Heart right ventricle (tissue), 16 donors: ENCODE measurements at regions of chr1 and their contacts with region 1.

Region 1: DNA sequence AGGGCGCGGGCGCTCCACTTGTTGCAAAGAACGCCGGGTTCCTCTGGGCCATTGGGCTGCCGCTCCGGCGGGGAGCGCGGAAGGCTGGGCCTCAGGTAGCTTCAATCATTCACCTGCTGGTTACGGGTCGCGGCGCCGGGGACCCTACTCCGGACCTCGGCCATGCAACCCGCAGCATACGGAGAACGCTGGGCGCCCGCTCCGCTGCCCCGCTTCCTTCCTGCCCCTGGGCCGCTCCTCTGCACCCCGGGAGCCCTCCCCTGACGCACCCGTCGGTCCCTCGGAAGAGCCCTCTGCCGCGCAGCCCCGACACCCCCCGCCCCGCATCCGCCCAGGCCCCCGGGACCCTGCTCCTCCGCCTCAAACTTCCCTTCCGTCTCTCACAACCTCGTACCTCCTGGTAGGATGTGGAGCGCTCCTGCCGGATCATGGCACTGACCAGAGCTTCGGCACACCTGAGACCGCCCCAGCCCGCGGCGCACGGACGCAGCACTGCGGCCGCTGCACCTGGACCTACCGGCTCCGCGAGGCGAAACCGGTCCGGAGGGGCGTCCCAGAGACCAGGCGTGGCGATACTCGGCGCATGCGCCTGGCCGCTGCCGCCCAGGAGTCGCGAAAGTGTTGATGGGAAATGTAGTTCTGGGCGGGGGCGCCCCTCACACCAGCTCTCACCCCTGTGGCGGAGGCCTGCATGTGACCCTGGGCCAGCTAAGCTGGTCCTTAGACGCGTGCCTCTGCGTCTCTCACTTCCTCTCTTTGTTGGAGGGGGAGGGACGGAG is at the start of gene PACC1:
- DNase-seq: peak; percentile 87 to 90
- ATAC-seq: peak; percentile 95 to 98 (median 97)
- H3K4me3 ChIP-seq: peak within 1 kb of the TSS; percentile 70 to 96 (median 86)
- H3K27ac ChIP-seq: peak within 1 kb of the TSS in 8 of 10 donors; percentile 13 to 81 (median 40)
- H3K4me1 ChIP-seq: peaks cover 0 to 50% (median 7%) of the 10 kb centered on the region in 9 donors
- H3K27me3 ChIP-seq: no peaks in the 10 kb centered on the region
- CTCF ChIP-seq: peak in 2 of 9 donors; percentile 14 to 15
- total RNA-seq, gene PACC1: 1.9 to 4.6 (median 2.4) TPM

Region 2: DNA sequence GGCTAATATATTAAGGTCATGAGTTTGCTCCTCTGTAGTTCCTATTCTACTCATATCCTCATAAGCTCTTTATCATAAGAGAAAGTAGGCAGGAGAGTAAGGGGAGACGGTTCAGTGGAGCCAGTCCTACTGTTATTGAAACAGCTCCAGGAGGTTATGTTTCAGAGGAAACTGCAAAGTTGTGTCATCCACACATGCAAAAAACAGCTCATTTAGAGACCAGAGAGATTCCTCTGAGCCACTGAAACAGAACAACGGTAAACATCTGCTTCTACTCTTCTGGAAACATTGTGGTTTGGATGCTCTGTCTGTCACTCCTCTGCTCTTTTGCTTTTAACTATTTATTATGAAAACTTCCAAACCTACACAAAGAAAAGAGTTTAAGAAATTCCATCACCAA is 195.6 kb before region 1 on chr1:
- intact Hi-C with region 1: no loop called
- DNase-seq: no peak
- ATAC-seq: no peak
- H3K4me3 ChIP-seq: no peak overlapping the region
- H3K27ac ChIP-seq: no peak overlapping the region
- H3K4me1 ChIP-seq: peaks cover 0 to 25% (median 6%) of the 10 kb centered on the region in 9 donors
- H3K27me3 ChIP-seq: no peaks in the 10 kb centered on the region
- CTCF ChIP-seq: no peak

Region 3: DNA sequence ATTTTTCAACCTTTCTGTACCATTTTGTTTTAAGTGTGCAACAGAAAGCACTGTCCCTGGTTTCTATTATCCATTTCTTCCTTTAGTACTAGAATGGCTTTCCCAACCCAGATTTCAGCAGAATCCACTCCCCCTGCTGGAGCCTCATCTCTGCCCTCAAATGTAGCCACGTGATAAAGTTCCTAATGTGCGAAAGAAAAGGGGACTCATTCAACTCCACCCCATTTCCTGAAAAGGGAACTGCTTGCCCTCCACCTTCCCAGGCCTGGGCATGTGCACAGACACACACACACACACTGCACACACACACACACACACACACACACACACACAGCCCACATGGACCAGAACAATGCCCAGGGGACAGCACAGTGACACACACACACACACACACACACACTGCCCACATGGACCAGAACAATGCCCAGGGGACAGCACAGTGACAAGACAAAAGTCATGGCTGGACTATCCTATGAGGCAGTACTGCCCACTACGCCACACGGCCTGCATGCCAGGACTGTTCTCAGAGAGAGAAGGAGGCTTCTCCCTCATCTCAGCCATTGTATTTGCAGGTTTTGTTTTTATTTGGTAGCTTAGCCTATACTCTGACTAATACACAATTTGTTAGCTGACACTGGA is 33.0 kb before region 1 on chr1:
- intact Hi-C with region 1: no loop called
- DNase-seq: no peak
- ATAC-seq: no peak
- H3K4me3 ChIP-seq: no peak overlapping the region
- H3K27ac ChIP-seq: no peak overlapping the region
- H3K4me1 ChIP-seq: no peaks in the 10 kb centered on the region
- H3K27me3 ChIP-seq: no peaks in the 10 kb centered on the region
- CTCF ChIP-seq: no peak

Region 4: GRCh38 chr1:212432706-212433576 is 18.4 kb after region 1 on chr1 and contains the start of gene NENF:
- intact Hi-C with region 1: loop called in 1 of 10 experiments (anchors 2 kb)
- DNase-seq: peak; percentile 85 to 90
- ATAC-seq: peak; percentile 99 to 100 (median 99)
- H3K4me3 ChIP-seq: peak within 1 kb of the TSS; percentile 71 to 98 (median 85)
- H3K27ac ChIP-seq: peak within 1 kb of the TSS; percentile 66 to 94 (median 88)
- H3K4me1 ChIP-seq: peaks cover 0 to 40% (median 20%) of the 10 kb centered on the region in 9 donors
- H3K27me3 ChIP-seq: no peaks in the 10 kb centered on the region
- CTCF ChIP-seq: no peak
- total RNA-seq, gene NENF: 91.8 to 163 (median 112) TPM

Region 5: GRCh38 chr1:212545941-212546635 is 131.6 kb after region 1 on chr1:
- intact Hi-C with region 1: no loop called
- DNase-seq: no peak
- ATAC-seq: peak in 5 of 8 donors; percentile 52 to 76 (median 64)
- H3K4me3 ChIP-seq: no peak overlapping the region
- H3K27ac ChIP-seq: peak overlapping the region in 3 of 10 donors; percentile 29 to 70 (median 31)
- H3K4me1 ChIP-seq: peaks cover 0 to 13% (median 0%) of the 10 kb centered on the region in 9 donors
- H3K27me3 ChIP-seq: no peaks in the 10 kb centered on the region
- CTCF ChIP-seq: no peak

Region 6: GRCh38 chr1:212630158-212630900 is 215.8 kb after region 1 on chr1:
- intact Hi-C with region 1: no loop called
- DNase-seq: peak; percentile 56 to 60
- ATAC-seq: peak; percentile 85 to 93 (median 90)
- H3K4me3 ChIP-seq: no peak overlapping the region
- H3K27ac ChIP-seq: no peak overlapping the region
- H3K4me1 ChIP-seq: peaks cover 0 to 20% (median 9%) of the 10 kb centered on the region in 9 donors
- H3K27me3 ChIP-seq: no peaks in the 10 kb centered on the region
- CTCF ChIP-seq: peak; percentile 76 to 94 (median 85)

Region 7: GRCh38 chr1:213960963-213961362 is 1546.4 kb after region 1 on chr1:
- intact Hi-C with region 1: loop called in 1 of 10 experiments (anchors 5 kb)
- DNase-seq: no peak
- ATAC-seq: no peak
- H3K4me3 ChIP-seq: no peak overlapping the region
- H3K27ac ChIP-seq: no peak overlapping the region
- H3K4me1 ChIP-seq: no peaks in the 10 kb centered on the region
- H3K27me3 ChIP-seq: peaks cover 0 to 13% (median 0%) of the 10 kb centered on the region in 7 donors
- CTCF ChIP-seq: no peak